HepG2 (cell line): ENCODE measurements at regions of chr12 and their contacts with region 1.

Region 1: DNA sequence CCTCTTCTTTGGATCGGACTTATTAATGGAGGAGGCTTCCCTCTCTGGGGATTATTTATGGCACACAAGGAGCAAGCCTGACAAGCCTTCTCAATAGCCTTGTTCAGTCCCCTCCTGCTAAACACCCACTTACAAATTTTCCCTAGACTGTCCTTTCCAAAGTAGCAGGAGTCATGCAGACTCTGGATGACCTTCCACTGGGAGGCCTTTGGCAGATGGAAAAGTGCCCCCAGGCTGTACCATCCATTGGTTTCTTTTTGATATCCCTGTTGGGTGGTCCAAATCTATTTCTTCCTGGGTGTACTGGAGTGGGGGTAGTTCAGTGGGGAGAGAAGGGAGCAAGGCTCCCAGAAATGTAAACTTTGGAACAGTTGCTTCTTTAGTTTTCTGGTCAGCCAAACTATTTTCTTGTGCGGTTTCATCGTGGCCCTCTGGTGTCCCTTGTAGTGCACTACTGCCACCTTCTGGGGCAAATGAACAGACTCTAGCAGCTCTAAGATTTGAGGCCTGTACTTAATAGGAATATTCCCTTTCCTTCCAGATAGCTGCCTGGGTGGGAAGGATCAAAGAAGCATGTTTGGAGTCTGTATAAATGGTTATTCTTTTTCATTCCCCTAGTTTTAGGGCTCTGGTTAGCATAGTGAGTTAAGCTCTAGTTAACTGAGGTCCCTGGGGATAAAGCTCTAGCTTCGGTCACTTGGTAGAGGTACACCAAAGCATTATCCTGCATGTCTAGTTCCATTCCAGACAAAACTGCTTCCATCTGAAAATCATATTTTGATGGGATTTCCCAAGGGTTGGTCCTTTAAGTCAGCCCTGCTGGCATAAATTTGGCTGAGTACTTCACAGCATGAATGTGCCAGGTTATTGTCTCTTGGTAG is 409.5 kb downstream of the SLC6A15 start:
- DNase-seq: peak; percentile 16
- ATAC-seq: peak; percentile 97
- H3K4me3 ChIP-seq: no peak overlapping the region
- H3K27ac ChIP-seq: no peak overlapping the region
- H3K4me1 ChIP-seq: no peaks in the 10 kb centered on the region
- H3K27me3 ChIP-seq: no peaks in the 10 kb centered on the region
- CTCF ChIP-seq: peak; percentile 67
- EP300 ChIP-seq: no peak
- POLR2A ChIP-seq: no peak
- RAD21 ChIP-seq: peak; percentile 33; the same call in 1 of the 2 replicates

Region 2: GRCh38 chr12:83823431-83823963 is 679.6 kb before region 1 on chr12:
- CTCF ChIA-PET with region 1: no interaction called
- POLR2A ChIA-PET with region 1: no interaction called
- in situ Hi-C with region 1: no loop called
- intact Hi-C with region 1: loop called (anchors 1 kb)
- DNase-seq: peak; percentile 27
- ATAC-seq: peak; percentile 87
- H3K4me3 ChIP-seq: no peak overlapping the region
- H3K27ac ChIP-seq: no peak overlapping the region
- H3K4me1 ChIP-seq: no peaks in the 10 kb centered on the region
- H3K27me3 ChIP-seq: no peaks in the 10 kb centered on the region
- CTCF ChIP-seq: peak; percentile 42; the same call in 1 of the 2 replicates
- EP300 ChIP-seq: no peak
- POLR2A ChIP-seq: no peak
- RAD21 ChIP-seq: no peak

Region 3: GRCh38 chr12:84572186-84572585 is 69.0 kb after region 1 on chr12:
- CTCF ChIA-PET with region 1: no interaction called
- POLR2A ChIA-PET with region 1: no interaction called
- in situ Hi-C with region 1: no loop called
- intact Hi-C with region 1: no loop called
- DNase-seq: no peak
- ATAC-seq: no peak
- H3K4me3 ChIP-seq: no peak overlapping the region
- H3K27ac ChIP-seq: no peak overlapping the region
- H3K4me1 ChIP-seq: no peaks in the 10 kb centered on the region
- H3K27me3 ChIP-seq: no peaks in the 10 kb centered on the region
- CTCF ChIP-seq: no peak
- EP300 ChIP-seq: no peak
- POLR2A ChIP-seq: no peak
- RAD21 ChIP-seq: no peak